ENCODE measurements at regions of chr22 and their contacts with region 1.

Region 1: DNA sequence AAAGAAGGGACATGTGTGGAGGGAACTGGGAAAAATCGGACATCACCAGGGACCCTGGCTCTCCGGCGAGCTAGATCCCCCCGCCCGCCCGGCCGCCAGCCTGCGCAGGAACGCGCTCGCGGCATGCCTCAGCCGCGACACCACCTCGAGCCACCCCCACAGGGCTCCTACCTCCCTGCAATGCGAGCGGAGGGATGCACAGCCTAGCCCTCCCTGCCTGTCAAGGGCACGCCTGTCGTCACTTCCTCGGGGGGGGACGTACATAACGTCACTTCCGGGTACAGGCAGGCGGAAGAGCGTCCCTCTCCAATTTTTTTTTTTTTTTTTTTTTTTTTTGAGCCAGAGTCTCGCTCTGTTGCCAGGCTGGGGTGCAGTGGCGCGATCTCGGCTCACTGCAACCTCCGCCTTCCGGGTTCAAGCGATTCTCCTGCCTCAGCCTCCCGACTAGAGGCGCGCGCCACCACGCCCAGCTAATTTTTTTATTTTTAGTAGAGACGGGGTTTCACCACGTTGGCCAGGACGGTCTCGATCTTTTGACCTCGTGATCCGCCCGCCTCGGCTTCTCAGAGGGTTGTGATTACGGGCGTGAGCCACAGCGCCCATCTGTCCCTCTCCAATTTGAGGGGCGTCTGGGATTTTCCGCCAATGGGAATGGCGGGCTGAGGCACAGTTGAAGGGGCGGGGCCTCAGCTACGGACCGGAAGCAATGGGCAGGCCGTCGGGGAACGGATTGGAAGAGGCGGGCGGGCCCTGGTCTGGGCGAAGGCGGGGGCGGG is at the start of gene TXN2:
- DNase-seq: peak; percentile 91 to 99 (median 97)
- ATAC-seq: peak; percentile 85
- H3K4me3 ChIP-seq: peak within 1 kb of the TSS; percentile 68
- H3K4me3 Mint-ChIP-seq: peak within 1 kb of the TSS; percentile 95
- H3K27ac ChIP-seq: peak within 1 kb of the TSS; percentile 77 to 99
- H3K27ac Mint-ChIP-seq: peak within 1 kb of the TSS; percentile 97
- H3K4me1 ChIP-seq: peaks cover 13% of the 10 kb centered on the region
- H3K4me1 Mint-ChIP-seq: peaks cover 16% of the 10 kb centered on the region
- H3K27me3 ChIP-seq: no peaks in the 10 kb centered on the region
- H3K27me3 Mint-ChIP-seq: no peaks in the 10 kb centered on the region
- CTCF ChIP-seq: no peak
- total RNA-seq, gene TXN2: 24.4 to 29.0 TPM

Region 2: GRCh38 chr22:36156515-36157419 is 324.8 kb before region 1 on chr22:
- CTCF ChIA-PET with region 1: interaction called, 4 read pairs
- POLR2A ChIA-PET with region 1: no interaction called
- intact Hi-C with region 1: loop called in 1 of 2 experiments (anchors 1 kb)
- DNase-seq: peak; percentile 36 to 90 (median 80)
- ATAC-seq: peak; percentile 46
- H3K4me3 ChIP-seq: peak overlapping the region; percentile 86 to 91
- H3K4me3 Mint-ChIP-seq: peak overlapping the region; percentile 97
- H3K27ac ChIP-seq: peak overlapping the region; percentile 77 to 96
- H3K27ac Mint-ChIP-seq: peak overlapping the region; percentile 99
- H3K4me1 ChIP-seq: peaks cover 62% of the 10 kb centered on the region
- H3K4me1 Mint-ChIP-seq: peaks cover 90% of the 10 kb centered on the region
- H3K27me3 ChIP-seq: no peaks in the 10 kb centered on the region
- H3K27me3 Mint-ChIP-seq: no peaks in the 10 kb centered on the region
- CTCF ChIP-seq: no peak

Region 3: GRCh38 chr22:36528795-36529751 is 47.5 kb after region 1 on chr22 and contains the start of gene EIF3D:
- CTCF ChIA-PET with region 1: interaction called, 4 read pairs
- POLR2A ChIA-PET with region 1: interaction called, 3 read pairs
- intact Hi-C with region 1: loop called (anchors 1 kb)
- DNase-seq: peak; percentile 95 to 100 (median 98)
- ATAC-seq: peak; percentile 92
- H3K4me3 ChIP-seq: peak within 1 kb of the TSS; percentile 67 to 90
- H3K4me3 Mint-ChIP-seq: peak within 1 kb of the TSS; percentile 90
- H3K27ac ChIP-seq: peak within 1 kb of the TSS; percentile 91 to 93
- H3K27ac Mint-ChIP-seq: peak within 1 kb of the TSS; percentile 99
- H3K4me1 ChIP-seq: peaks cover 12% of the 10 kb centered on the region
- H3K4me1 Mint-ChIP-seq: peaks cover 24% of the 10 kb centered on the region
- H3K27me3 ChIP-seq: no peaks in the 10 kb centered on the region
- H3K27me3 Mint-ChIP-seq: no peaks in the 10 kb centered on the region
- CTCF ChIP-seq: no peak
- total RNA-seq, gene EIF3D: 302 to 315 TPM

Region 4: DNA sequence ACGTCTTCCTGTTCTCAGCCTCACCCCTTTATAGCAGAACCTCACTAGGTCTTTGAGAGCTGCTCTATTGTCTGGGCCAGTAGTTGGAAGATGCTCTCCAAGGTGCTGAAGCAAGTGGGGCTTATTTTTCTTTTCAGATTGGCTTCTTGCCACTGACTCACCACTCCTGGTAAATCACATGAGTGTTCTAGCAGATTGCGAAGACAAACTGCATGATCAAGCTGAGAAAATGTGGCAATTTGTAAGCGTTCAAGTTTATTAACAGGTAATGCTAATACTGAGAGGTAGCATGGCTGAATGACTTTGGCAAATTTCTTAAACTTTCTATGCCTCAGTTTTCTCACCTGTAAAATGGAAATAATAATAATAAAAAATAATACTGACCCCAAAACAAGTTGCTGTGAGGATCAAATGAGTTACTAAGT is 162.8 kb after region 1 on chr22:
- CTCF ChIA-PET with region 1: no interaction called
- POLR2A ChIA-PET with region 1: no interaction called
- intact Hi-C with region 1: no loop called
- DNase-seq: peak in 2 of 9 experiments; percentile 22 to 33
- ATAC-seq: no peak
- H3K4me3 ChIP-seq: no peak overlapping the region
- H3K4me3 Mint-ChIP-seq: no peak overlapping the region
- H3K27ac ChIP-seq: no peak overlapping the region
- H3K27ac Mint-ChIP-seq: no peak overlapping the region
- H3K4me1 ChIP-seq: no peaks in the 10 kb centered on the region
- H3K4me1 Mint-ChIP-seq: no peaks in the 10 kb centered on the region
- H3K27me3 ChIP-seq: peaks cover 3 to 9% of the 10 kb centered on the region in 2 experiments
- H3K27me3 Mint-ChIP-seq: peaks cover 54% of the 10 kb centered on the region
- CTCF ChIP-seq: no peak